Endothelial cell of umbilical vein (primary cell): ENCODE measurements at regions of chr10 and their contacts with region 1.

Region 1: DNA sequence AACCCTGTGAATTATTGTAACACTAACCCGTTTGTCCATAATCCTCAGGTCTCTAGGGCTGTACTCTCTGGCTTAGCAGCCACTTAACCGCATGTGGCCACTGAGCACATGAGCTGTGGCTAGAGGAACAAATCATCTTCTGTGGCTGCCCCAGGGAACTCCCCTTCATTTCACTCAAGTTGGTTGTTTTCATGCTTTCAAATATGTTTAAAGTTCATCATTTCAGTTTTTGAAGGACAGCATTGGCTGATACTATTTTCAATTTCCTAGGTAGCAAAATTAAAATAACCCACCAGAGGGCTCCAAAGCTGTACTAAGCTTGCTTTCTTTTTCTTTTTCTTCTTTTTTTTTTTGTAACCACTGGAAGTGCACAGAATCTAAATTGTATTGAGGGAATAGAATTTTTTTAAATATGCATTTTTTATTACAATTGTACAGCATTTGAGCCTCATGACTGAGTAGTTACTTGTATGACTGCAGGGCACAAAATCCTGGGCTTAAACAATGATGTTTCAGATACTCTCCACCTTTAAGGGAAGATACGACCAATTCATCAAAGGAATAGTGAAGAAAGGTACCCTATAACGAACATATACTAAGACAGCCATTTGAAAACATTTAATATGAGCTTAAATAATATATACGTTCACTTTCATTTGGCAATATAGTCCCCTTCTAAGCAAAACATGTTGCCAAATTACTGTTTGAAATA is 38.6 kb downstream of the MRC1 start:
- DNase-seq: peak; percentile 31
- H3K4me3 ChIP-seq: no peak overlapping the region
- H3K27ac ChIP-seq: no peak overlapping the region
- H3K4me1 ChIP-seq: peaks cover 7% of the 10 kb centered on the region
- H3K27me3 ChIP-seq: no peaks in the 10 kb centered on the region
- CTCF ChIP-seq: peak; percentile 19 to 26
- POLR2A ChIP-seq: no peak

Region 2: DNA sequence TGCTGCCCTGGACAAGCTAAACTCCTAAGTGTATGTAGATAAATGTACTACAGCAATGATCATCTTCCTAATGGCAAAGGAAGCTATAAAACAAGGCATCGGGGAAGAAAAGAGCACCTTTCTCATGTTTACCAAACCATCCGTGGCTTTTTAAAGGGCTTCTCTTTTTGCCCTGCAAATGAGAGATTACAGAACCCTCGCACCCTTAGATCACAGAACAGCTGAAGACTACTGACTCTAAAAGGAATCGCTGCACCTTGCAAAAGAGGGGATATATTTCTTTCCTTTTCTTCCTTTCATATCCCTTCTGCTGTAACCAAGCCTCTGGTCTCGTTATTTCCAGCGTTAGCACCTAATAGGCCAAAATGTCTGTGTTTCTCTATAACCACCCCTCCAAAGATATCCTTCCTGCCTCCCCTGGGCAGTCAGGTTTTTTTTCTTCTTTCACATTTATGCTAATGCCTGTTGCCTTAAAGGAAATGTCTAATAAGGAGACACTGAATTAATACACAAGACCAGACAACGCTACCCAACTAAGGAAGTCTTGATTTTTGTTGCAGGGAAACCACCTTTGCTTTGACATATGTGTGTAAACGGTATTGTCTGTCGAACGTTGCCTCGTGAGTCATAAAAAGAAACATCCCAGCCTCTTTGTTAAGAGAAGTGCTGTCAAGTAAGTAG is 403.9 kb before region 1 on chr10:
- CTCF ChIA-PET with region 1: no interaction called
- POLR2A ChIA-PET with region 1: no interaction called
- dilution Hi-C with region 1: no loop called
- intact Hi-C with region 1: no loop called
- DNase-seq: peak; percentile 57
- H3K4me3 ChIP-seq: no peak overlapping the region
- H3K27ac ChIP-seq: no peak overlapping the region
- H3K4me1 ChIP-seq: peaks cover 8% of the 10 kb centered on the region
- H3K27me3 ChIP-seq: no peaks in the 10 kb centered on the region
- CTCF ChIP-seq: no peak
- POLR2A ChIP-seq: no peak

Region 3: DNA sequence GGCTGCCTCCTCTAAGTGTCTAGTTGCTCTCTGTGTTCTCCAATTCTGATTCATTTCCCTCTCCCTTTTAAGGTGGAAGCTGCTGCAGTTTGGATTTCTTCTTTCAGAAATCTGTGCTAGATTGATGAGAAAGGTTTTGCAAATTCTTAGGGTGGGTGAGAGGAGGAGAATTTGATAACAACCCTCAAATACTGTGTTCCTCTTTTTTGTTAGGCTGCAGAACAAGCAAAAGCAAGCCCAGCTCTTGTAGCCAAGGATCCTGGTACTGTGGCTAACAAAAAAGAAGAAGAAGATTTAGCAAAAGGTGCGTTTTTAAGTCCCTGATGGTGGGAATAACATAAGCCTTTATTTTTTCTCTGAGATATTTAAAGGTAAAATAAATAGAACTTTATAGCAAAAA is 154.7 kb before region 1 on chr10:
- CTCF ChIA-PET with region 1: no interaction called
- POLR2A ChIA-PET with region 1: no interaction called
- dilution Hi-C with region 1: no loop called
- intact Hi-C with region 1: no loop called
- DNase-seq: peak; percentile 13
- H3K4me3 ChIP-seq: no peak overlapping the region
- H3K27ac ChIP-seq: no peak overlapping the region
- H3K4me1 ChIP-seq: no peaks in the 10 kb centered on the region
- H3K27me3 ChIP-seq: no peaks in the 10 kb centered on the region
- CTCF ChIP-seq: no peak
- POLR2A ChIP-seq: no peak

Region 4: GRCh38 chr10:17737027-17737965 is 110.4 kb before region 1 on chr10:
- CTCF ChIA-PET with region 1: interaction called, 10 read pairs
- POLR2A ChIA-PET with region 1: no interaction called
- dilution Hi-C with region 1: no loop called
- intact Hi-C with region 1: no loop called
- DNase-seq: peak; percentile 43
- H3K4me3 ChIP-seq: no peak overlapping the region
- H3K27ac ChIP-seq: no peak overlapping the region
- H3K4me1 ChIP-seq: peaks cover 9% of the 10 kb centered on the region
- H3K27me3 ChIP-seq: no peaks in the 10 kb centered on the region
- CTCF ChIP-seq: peak; percentile 29 to 45
- POLR2A ChIP-seq: no peak

Region 5: GRCh38 chr10:17742918-17743317 is 104.8 kb before region 1 on chr10:
- CTCF ChIA-PET with region 1: interaction called, 13 read pairs
- POLR2A ChIA-PET with region 1: no interaction called
- dilution Hi-C with region 1: no loop called
- intact Hi-C with region 1: loop called (anchors 2 kb)
- DNase-seq: peak; percentile 66
- H3K4me3 ChIP-seq: no peak overlapping the region
- H3K27ac ChIP-seq: no peak overlapping the region
- H3K4me1 ChIP-seq: peaks cover 25% of the 10 kb centered on the region
- H3K27me3 ChIP-seq: no peaks in the 10 kb centered on the region
- CTCF ChIP-seq: peak; percentile 67 to 75
- POLR2A ChIP-seq: no peak

Region 6: DNA sequence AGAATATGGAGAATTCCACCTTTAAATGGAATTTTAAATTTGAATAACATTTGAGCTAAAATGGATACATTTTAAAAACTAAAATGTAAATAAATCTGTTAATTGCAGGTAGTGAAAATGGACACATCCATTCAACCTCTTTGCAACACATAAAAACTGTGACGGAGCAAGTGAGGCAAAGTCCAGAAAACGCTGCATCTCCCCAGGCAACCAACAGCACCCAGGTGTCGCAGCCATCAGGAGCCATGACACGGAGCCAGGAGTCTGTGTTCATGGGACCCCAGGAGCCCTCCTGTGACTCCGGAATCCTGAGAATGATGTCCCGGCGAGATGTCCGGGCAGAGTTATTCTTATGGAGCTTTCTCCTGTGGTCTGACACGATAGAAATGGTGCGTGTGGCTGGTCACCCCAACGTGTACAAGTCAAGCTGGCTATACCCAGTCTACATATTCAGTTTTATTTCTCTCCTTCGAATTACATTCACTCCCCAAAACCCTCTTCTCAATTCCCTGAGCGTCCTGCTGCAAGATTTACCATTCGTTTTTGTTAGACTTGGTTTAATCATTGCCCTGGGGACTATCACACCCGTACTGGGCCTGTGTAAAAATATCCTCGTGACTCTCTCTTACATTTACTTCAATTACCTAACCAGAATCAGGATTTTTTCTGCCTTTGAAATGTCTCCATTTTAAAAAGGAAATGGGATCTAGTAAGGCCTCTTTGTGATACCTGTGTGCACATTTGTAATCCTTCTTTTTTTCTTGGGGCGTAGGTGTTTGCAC is 51.7 kb before region 1 on chr10:
- CTCF ChIA-PET with region 1: no interaction called
- POLR2A ChIA-PET with region 1: no interaction called
- dilution Hi-C with region 1: no loop called
- intact Hi-C with region 1: no loop called
- DNase-seq: no peak
- H3K4me3 ChIP-seq: no peak overlapping the region
- H3K27ac ChIP-seq: no peak overlapping the region
- H3K4me1 ChIP-seq: no peaks in the 10 kb centered on the region
- H3K27me3 ChIP-seq: no peaks in the 10 kb centered on the region
- CTCF ChIP-seq: no peak
- POLR2A ChIP-seq: no peak

Region 7: DNA sequence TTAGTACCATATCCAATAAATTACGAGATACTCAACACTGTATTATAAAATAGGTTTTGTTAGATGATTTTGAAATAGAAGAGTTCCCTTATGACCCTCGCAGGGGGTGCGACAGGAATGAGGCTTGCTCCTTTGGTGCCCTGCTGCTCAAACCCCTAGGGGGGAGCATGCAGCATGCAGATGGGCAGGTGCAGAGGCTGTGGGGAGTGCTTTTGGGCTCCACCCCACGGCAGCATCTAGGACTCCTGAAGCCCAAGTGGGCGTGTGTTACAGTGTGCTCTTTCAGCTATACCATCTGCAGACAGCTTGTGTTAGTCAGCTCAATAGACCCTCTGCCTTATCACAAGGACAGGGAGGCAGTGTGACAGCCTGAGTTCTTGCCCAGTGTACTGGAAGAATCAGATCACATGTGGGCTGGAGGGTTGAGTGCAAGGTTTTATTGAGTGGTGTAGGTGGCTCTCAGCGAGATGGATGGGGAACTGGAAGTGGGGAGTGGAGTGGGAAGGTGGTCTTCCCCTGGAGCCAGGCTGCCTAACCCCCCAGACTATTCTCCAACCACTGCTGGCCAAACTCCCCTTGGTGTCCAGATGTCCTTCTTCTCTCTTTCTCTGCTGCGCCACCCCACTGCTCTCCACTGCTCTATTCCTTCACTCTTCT is 41.7 kb before region 1 on chr10:
- CTCF ChIA-PET with region 1: interaction called, 4 read pairs
- POLR2A ChIA-PET with region 1: no interaction called
- dilution Hi-C with region 1: no loop called
- intact Hi-C with region 1: loop called (anchors 5 kb)
- DNase-seq: no peak
- H3K4me3 ChIP-seq: no peak overlapping the region
- H3K27ac ChIP-seq: no peak overlapping the region
- H3K4me1 ChIP-seq: peaks cover 16% of the 10 kb centered on the region
- H3K27me3 ChIP-seq: no peaks in the 10 kb centered on the region
- CTCF ChIP-seq: peak in 1 of 2 donors; percentile 23
- POLR2A ChIP-seq: no peak

Region 8: GRCh38 chr10:17836942-17837341 is 10.8 kb before region 1 on chr10:
- CTCF ChIA-PET with region 1: interaction called, 14 read pairs
- POLR2A ChIA-PET with region 1: no interaction called
- dilution Hi-C with region 1: no loop called
- intact Hi-C with region 1: no loop called
- DNase-seq: peak; percentile 87
- H3K4me3 ChIP-seq: peak overlapping the region in 1 of 3 experiments; percentile 28
- H3K27ac ChIP-seq: peak overlapping the region; percentile 62
- H3K4me1 ChIP-seq: peaks cover 20% of the 10 kb centered on the region
- H3K27me3 ChIP-seq: no peaks in the 10 kb centered on the region
- CTCF ChIP-seq: no peak
- POLR2A ChIP-seq: no peak

Region 9: DNA sequence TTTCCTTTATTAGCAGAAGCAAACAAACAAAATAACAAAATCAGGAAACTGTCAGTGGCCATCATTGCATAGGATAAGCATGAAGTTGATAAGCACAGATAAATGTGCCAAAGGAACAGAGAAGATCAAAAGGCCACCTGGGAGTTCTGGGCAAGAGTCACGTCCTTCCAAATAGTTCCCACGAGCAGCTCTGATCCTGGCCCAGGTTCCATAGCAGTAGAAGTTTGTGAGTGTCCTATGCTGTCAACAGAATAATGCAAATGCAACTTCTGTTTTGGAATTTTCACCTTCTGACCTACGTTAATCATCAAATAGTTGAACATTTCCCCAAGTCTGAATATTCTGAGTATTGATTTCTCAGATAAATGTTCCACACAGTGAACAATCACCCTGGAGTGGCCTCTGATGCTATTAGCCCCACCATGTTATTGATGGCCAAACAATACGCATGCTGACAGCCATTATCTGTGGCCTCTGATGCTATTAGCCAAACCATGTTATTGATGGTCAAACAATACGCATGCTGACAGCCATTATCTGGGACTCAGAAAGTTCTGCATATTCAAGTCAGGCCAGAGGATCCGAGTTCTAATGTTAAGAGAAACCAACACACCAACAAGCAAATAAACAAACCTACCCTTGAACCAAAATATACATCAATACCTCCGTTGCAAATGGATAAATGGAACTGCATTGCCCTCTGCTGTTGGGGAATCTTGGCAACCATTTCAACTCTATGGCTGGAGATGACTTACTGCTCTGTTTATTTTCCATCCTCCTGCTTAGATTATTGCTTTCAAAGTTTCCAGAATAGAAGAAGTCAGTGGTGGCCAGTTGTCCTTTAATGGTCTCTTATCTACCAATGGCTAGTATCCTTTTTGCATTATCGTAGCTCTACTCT is 24.7 kb after region 1 on chr10:
- CTCF ChIA-PET with region 1: interaction called, 24 read pairs
- POLR2A ChIA-PET with region 1: no interaction called
- dilution Hi-C with region 1: no loop called
- intact Hi-C with region 1: loop called (anchors 2 kb)
- DNase-seq: peak; percentile 73
- H3K4me3 ChIP-seq: no peak overlapping the region
- H3K27ac ChIP-seq: no peak overlapping the region
- H3K4me1 ChIP-seq: no peaks in the 10 kb centered on the region
- H3K27me3 ChIP-seq: no peaks in the 10 kb centered on the region
- CTCF ChIP-seq: peak; percentile 57 to 58
- POLR2A ChIP-seq: no peak

Region 10: GRCh38 chr10:17905491-17905890 is 57.8 kb after region 1 on chr10:
- CTCF ChIA-PET with region 1: no interaction called
- POLR2A ChIA-PET with region 1: no interaction called
- dilution Hi-C with region 1: no loop called
- intact Hi-C with region 1: no loop called
- DNase-seq: no peak
- H3K4me3 ChIP-seq: no peak overlapping the region
- H3K27ac ChIP-seq: no peak overlapping the region
- H3K4me1 ChIP-seq: no peaks in the 10 kb centered on the region
- H3K27me3 ChIP-seq: peaks cover 6 to 12% of the 10 kb centered on the region in 2 experiments
- CTCF ChIP-seq: no peak
- POLR2A ChIP-seq: no peak

Region 11: GRCh38 chr10:18214691-18215563 is 367.2 kb after region 1 on chr10:
- CTCF ChIA-PET with region 1: no interaction called
- POLR2A ChIA-PET with region 1: no interaction called
- dilution Hi-C with region 1: no loop called
- intact Hi-C with region 1: loop called (anchors 2 kb)
- DNase-seq: peak; percentile 55
- H3K4me3 ChIP-seq: no peak overlapping the region
- H3K27ac ChIP-seq: no peak overlapping the region
- H3K4me1 ChIP-seq: no peaks in the 10 kb centered on the region
- H3K27me3 ChIP-seq: no peaks in the 10 kb centered on the region
- CTCF ChIP-seq: peak; percentile 47 to 65
- POLR2A ChIP-seq: no peak